CD8-positive, alpha-beta memory T cell (primary cell): ENCODE measurements at regions of chrX and their contacts with region 1.

Region 1: GRCh38 chrX:48539345-48540027 is at the start of gene TBC1D25:
- DNase-seq: peak; percentile 94 to 99 (median 95)
- H3K4me3 ChIP-seq: peak within 1 kb of the TSS; percentile 64
- H3K4me3 Mint-ChIP-seq: peak within 1 kb of the TSS; percentile 85 to 94 (median 90)
- H3K27ac ChIP-seq: peak within 1 kb of the TSS; percentile 89
- H3K27ac Mint-ChIP-seq: peak within 1 kb of the TSS; percentile 89 to 98 (median 96)
- H3K4me1 ChIP-seq: peaks cover 14% of the 10 kb centered on the region
- H3K4me1 Mint-ChIP-seq: peaks cover 16 to 26% (median 18%) of the 10 kb centered on the region in 3 donors
- H3K27me3 ChIP-seq: no peaks in the 10 kb centered on the region
- H3K27me3 Mint-ChIP-seq: no peaks in the 10 kb centered on the region
- total RNA-seq, gene TBC1D25: 14.0 to 15.2 TPM

Region 2: GRCh38 chrX:48465336-48465933 is 74.1 kb before region 1 on chrX:
- CTCF ChIA-PET with region 1: interaction called, 10 read pairs
- POLR2A ChIA-PET with region 1: no interaction called
- DNase-seq: no peak
- H3K4me3 ChIP-seq: no peak overlapping the region
- H3K4me3 Mint-ChIP-seq: peak overlapping the region in 3 of 7 donors; percentile 45 to 82 (median 62)
- H3K27ac ChIP-seq: no peak overlapping the region
- H3K27ac Mint-ChIP-seq: peak overlapping the region in 1 of 8 donors; percentile 61
- H3K4me1 ChIP-seq: peaks cover 13% of the 10 kb centered on the region
- H3K4me1 Mint-ChIP-seq: peaks cover 18 to 43% (median 29%) of the 10 kb centered on the region in 3 donors
- H3K27me3 ChIP-seq: no peaks in the 10 kb centered on the region
- H3K27me3 Mint-ChIP-seq: peaks cover 0 to 5% of the 10 kb centered on the region in 2 donors

Region 3: GRCh38 chrX:48508400-48509244 is 30.9 kb before region 1 on chrX and contains the start of gene PORCN:
- CTCF ChIA-PET with region 1: interaction called, 11 read pairs
- POLR2A ChIA-PET with region 1: interaction called, 4 read pairs
- DNase-seq: peak; percentile 67 to 86 (median 75)
- H3K4me3 ChIP-seq: peak within 1 kb of the TSS; percentile 52
- H3K4me3 Mint-ChIP-seq: peak within 1 kb of the TSS; percentile 87 to 94 (median 89)
- H3K27ac ChIP-seq: peak within 1 kb of the TSS; percentile 48
- H3K27ac Mint-ChIP-seq: peak within 1 kb of the TSS; percentile 82 to 94 (median 92)
- H3K4me1 ChIP-seq: peaks cover 10% of the 10 kb centered on the region
- H3K4me1 Mint-ChIP-seq: peaks cover 16 to 44% (median 26%) of the 10 kb centered on the region in 3 donors
- H3K27me3 ChIP-seq: no peaks in the 10 kb centered on the region
- H3K27me3 Mint-ChIP-seq: peaks cover 0 to under 1% of the 10 kb centered on the region in 2 donors
- total RNA-seq, gene PORCN: 12.8 to 13.5 TPM

Region 4: DNA sequence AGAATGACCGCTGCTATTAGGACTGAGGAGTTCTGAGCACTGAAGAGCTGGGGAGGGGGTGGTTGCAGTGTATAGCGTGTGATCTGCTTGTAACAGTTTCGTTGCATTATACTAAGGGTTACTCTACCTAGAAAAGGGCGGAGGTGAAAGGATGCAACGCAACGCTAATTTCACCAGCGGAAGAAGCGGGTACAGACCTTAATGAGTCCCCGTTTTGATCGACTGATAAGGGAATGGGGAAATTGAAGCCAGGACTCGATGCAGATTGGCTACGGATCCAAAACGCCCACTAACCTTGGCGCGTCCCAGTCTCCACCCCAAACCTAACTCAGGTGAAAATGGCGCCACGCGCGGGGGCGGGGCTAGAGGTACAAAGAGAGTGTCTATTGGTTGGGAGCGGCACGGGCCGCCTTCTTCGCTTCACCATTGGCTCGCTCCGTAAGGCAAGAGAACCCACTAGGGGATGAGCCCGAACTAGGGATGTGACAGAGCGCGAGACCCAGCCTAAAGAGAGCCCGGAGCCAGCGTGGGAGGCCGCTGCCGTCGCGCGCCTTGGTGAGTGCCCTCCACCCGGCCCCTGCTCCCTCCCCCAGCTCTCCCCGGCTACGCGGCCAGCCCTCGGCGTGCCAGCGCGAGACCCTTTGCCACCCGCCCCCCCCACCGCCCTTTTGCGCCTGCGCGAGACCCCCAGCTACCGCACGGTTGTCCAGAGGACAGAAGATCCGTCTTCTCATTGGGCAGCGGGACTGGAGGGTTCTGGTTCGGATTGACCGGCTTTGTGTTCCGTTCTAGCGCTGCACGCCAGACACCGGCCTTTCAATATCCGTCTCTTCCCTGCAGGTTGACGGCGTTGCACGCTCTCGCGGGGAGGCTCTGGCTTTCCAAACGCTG is 17.9 kb before region 1 on chrX and contains the start of gene EBP:
- CTCF ChIA-PET with region 1: interaction called, 3 read pairs
- POLR2A ChIA-PET with region 1: interaction called, 20 read pairs
- DNase-seq: peak; percentile 88 to 96 (median 94)
- H3K4me3 ChIP-seq: peak within 1 kb of the TSS; percentile 85
- H3K4me3 Mint-ChIP-seq: peak within 1 kb of the TSS; percentile 84 to 97 (median 90)
- H3K27ac ChIP-seq: peak within 1 kb of the TSS; percentile 83
- H3K27ac Mint-ChIP-seq: peak within 1 kb of the TSS; percentile 87 to 96 (median 96)
- H3K4me1 ChIP-seq: peaks cover 17% of the 10 kb centered on the region
- H3K4me1 Mint-ChIP-seq: peaks cover 22 to 47% (median 25%) of the 10 kb centered on the region in 3 donors
- H3K27me3 ChIP-seq: no peaks in the 10 kb centered on the region
- H3K27me3 Mint-ChIP-seq: peaks cover 0 to 2% of the 10 kb centered on the region in 2 donors
- total RNA-seq, gene EBP: 150 to 153 TPM

Region 5: DNA sequence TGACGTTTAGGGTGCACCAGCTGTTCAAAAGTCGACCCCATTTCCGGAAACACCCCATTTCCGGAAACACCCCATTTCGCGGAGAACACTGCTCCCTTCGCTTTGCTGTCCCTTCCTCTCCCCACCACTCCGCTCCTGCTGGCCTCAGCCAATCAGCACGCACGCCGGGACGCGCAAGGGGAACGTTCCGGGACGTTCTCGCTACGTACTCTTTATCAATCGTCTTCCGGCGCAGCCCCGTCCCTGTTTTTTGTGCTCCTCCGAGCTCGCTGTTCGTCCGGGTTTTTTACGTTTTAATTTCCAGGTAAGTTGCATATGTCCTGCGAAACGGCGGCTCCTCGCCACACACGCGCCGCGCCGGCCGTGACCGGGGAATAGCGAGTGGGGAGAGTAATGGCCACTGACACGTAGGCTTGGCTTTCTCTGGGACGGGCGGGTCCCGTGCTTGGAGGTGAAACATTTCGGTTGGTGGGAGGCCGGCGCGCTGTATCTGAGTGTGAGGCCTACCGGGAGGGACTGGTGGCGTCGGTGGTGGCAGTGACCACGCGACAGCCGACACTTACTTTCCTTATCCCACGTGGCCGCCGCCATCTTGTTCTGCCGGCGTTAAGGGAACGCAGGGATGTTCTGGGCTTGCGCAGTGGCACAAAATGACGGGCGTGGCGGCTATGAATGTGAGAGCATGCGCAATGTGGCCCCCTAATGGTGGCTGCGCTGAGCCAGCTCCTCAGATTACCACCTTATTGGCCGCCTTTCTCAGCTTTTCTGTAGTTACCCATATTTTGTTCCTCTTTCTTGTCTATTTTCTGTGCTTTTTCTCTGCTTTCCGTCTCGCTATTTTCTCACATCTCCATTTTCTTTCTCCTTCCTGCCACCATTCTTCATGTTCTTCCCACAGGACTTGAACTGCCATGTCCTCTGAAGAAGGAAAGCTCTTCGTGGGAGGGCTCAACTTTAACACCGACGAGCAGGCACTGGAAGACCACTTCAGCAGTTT is 35.1 kb after region 1 on chrX and contains the start of gene RBM3:
- CTCF ChIA-PET with region 1: interaction called, 7 read pairs
- POLR2A ChIA-PET with region 1: interaction called, 22 read pairs
- DNase-seq: peak; percentile 86 to 96 (median 91)
- H3K4me3 ChIP-seq: peak within 1 kb of the TSS; percentile 95
- H3K4me3 Mint-ChIP-seq: peak within 1 kb of the TSS; percentile 87 to 99 (median 98)
- H3K27ac ChIP-seq: peak within 1 kb of the TSS; percentile 99
- H3K27ac Mint-ChIP-seq: peak within 1 kb of the TSS; percentile 95 to 100 (median 99)
- H3K4me1 ChIP-seq: peaks cover 22% of the 10 kb centered on the region
- H3K4me1 Mint-ChIP-seq: peaks cover 16 to 30% (median 19%) of the 10 kb centered on the region in 3 donors
- H3K27me3 ChIP-seq: no peaks in the 10 kb centered on the region
- H3K27me3 Mint-ChIP-seq: peaks cover 0 to 7% of the 10 kb centered on the region in 2 donors
- total RNA-seq, gene RBM3: 245 to 255 TPM